ENCODE measurements at regions of chr2 and their contacts with region 1.

Region 1: DNA sequence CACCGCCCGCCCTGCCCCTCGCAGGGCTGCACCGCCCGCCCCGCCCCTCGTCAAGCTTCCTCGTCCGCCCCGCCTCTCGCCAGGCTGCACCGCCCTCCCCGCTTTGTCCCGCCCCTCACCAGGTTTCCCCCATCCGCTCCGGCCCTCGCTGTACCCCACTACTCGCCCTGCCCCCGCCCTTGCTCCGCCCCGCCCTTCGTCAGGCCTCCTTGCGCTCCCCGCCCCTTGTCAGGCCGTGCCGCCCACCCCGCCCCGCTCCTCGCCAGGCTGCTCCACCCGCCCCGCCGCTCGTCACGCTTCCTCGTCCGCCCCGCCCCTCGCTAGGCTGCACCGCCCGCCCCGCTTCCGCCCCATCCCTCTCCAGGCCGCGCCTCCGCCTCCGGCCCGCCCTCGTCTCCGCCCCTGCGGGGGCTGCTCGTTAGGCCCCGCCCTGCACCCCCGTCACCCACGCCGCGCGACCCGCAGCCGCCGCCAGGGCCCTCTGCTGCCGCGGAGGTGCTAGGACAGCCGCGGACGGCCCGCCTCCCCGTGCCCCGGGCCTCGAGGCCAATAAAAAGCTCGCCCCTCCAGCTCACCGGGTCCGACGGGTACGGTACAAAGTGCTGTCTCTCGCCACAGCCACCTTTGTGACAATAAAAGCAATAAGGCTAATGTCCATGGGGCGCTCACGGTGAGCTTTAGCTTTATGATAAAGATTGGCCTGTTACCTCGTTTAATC is 574 bp upstream of the DNPEP start:
- DNase-seq: peak; percentile 99
- H3K4me3 Mint-ChIP-seq: peak overlapping the region; percentile 75
- H3K27ac Mint-ChIP-seq: peak overlapping the region; percentile 84
- H3K4me1 Mint-ChIP-seq: peaks cover 12% of the 10 kb centered on the region
- H3K27me3 Mint-ChIP-seq: peaks cover 9% of the 10 kb centered on the region

Region 2: GRCh38 chr2:218286570-218287459 is 1101.5 kb before region 1 on chr2:
- intact Hi-C with region 1: loop called (anchors 10 kb)
- DNase-seq: peak; percentile 95
- H3K4me3 Mint-ChIP-seq: peak overlapping the region; percentile 86
- H3K27ac Mint-ChIP-seq: peak overlapping the region; percentile 92
- H3K4me1 Mint-ChIP-seq: peaks cover 67% of the 10 kb centered on the region
- H3K27me3 Mint-ChIP-seq: no peaks in the 10 kb centered on the region

Region 3: GRCh38 chr2:219160186-219161017 is 227.9 kb before region 1 on chr2 and contains the start of gene NHEJ1:
- intact Hi-C with region 1: loop called (anchors 1 kb)
- DNase-seq: peak; percentile 98
- H3K4me3 Mint-ChIP-seq: peak within 1 kb of the TSS; percentile 88
- H3K27ac Mint-ChIP-seq: peak within 1 kb of the TSS; percentile 97
- H3K4me1 Mint-ChIP-seq: peaks cover 20% of the 10 kb centered on the region
- H3K27me3 Mint-ChIP-seq: no peaks in the 10 kb centered on the region
- total RNA-seq, gene NHEJ1: 20.7 and 22.8 TPM in 2 replicates

Region 4: DNA sequence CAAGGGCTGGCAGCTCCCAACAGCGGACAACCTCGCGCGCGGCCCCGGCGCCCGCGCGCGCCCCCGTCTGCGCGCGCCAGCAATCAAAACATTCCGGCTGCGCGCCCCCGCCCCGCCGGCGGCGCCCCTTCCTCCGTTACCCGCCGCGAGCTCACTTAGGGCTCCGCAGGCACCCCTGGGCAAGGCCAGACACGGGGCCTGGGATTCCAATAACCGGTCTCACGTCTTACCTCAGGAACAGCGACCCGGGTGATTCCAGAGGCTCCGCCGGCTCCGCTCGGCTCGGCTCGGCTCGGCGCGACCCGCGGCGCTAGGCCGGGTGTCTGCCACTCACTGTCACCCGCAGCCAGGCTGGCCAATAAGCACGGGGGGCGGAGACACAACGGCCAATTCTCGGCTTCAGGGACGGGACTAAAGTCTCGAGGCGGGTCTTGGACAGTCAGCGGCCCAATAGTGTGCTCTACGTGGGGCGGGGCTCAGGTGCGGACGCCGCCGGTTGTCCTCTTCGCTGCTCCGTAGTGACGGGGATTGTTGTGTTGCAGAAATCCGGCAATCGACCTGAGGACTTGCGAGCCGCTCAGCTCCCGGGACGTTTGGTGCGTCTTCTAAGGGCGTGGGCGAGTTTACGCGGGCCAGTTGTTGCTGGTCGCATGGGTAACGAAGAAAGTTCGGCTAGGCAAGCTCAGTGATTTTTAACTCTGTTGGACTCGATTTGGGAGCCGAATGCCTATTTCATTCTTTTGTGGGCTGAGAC is 158.8 kb before region 1 on chr2 and contains the starts of genes ANKZF1 and ATG9A:
- intact Hi-C with region 1: loop called (anchors 1 kb)
- DNase-seq: peak; percentile 100
- H3K4me3 Mint-ChIP-seq: peak within 1 kb of the TSS; percentile 92
- H3K27ac Mint-ChIP-seq: peak within 1 kb of the TSS; percentile 98
- H3K4me1 Mint-ChIP-seq: peaks cover 43% of the 10 kb centered on the region
- H3K27me3 Mint-ChIP-seq: no peaks in the 10 kb centered on the region
- total RNA-seq, gene ANKZF1: 144 and 149 TPM in 2 replicates
- total RNA-seq, gene ATG9A: 61.6 and 67.2 TPM in 2 replicates

Region 5: DNA sequence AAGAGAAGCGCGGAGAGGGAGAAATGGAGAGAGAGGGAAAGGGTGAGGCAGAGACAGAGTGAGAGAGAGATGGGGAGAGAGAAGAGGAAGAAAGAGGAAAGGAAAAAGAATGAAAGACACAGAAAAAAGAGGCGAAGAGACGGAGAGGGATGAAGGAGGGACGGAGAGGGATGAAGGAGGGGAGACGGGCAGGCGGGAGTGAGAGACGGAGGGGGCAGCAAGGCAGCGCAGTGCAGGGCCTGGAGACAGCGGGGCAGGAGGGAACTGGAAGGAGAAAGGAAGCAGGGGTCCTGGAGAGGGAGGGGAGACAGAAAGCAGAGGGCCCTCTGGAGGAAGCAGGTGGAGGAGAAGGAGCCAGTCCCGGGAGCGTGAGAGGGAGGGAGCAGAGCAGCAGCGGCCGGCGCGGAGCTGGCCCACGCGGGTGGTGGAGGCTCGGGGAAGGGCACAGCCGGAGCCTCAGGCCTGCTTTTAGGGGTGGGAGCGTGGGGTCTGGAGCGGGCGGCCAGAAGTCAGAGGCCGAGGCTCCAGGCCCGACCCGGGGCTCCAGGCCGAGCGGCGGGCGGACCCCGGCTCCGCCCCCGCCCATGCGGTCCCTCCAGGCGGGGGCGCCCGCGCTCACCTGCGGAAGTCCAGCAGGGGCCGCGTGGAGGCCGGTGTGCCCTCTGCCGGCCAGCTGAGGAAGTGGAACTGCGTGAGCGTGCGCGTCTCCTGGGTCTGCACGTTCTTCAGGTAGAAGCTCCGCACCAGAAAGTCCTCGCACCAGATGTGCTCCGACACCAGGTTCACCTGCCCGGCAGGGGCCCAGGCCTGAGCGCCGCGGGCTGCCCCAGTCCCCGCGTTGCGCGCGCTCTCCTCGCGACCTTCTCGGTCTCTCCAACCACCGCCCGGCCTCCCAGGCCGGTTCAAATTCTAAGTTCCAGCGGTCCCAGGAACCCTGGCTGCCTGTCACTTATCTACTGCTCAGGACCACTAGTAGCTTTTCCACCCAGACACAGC is 93.6 kb before region 1 on chr2:
- intact Hi-C with region 1: loop called (anchors 1 kb)
- DNase-seq: peak; percentile 97
- H3K4me3 Mint-ChIP-seq: peak overlapping the region; percentile 84
- H3K27ac Mint-ChIP-seq: peak overlapping the region; percentile 97
- H3K4me1 Mint-ChIP-seq: peaks cover 17% of the 10 kb centered on the region
- H3K27me3 Mint-ChIP-seq: peaks cover 6% of the 10 kb centered on the region

Region 6: DNA sequence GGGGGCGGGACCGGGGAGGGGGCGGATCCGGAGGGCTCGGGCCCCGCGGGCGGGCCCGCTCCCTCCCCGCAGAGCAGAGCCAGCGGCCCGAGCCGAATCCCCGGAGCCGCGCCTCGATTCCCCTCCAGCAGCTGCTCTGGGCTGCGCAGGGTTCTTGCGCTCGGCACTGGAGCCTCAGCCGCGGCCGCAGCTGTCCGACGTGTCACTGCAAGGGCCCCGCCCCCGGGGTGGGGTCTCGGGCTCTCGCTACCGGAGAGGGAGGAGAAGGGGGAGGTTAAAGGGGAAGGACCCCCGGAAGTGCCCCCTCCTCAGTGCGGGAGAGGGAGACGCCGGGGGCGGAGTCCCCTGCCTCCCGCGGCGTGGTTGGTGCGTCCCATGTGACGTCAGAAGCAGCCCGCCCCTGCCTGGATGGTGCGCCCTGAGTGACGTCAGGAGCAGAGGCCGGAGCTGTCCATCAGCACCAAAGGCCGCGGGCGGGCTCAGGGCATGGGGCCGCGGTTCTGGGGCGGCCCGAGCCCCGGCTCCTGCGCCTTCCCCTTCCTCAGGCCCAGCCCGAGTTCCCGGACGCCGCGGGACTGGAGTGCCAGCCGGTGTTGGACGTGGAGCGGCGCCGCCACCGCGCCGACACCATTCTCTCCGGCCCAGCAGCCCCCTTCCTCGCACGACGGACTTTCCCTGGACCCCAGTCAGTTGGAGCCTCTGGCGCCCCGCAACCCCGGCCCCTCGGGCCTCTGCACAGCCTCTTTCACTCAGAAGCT is 155.5 kb after region 1 on chr2 and contains the starts of genes CHPF and TMEM198:
- intact Hi-C with region 1: loop called (anchors 1 kb)
- DNase-seq: peak; percentile 99
- H3K4me3 Mint-ChIP-seq: peak within 1 kb of the TSS; percentile 89
- H3K27ac Mint-ChIP-seq: peak within 1 kb of the TSS; percentile 75
- H3K4me1 Mint-ChIP-seq: peaks cover 17% of the 10 kb centered on the region
- H3K27me3 Mint-ChIP-seq: peaks cover 18% of the 10 kb centered on the region
- total RNA-seq, gene CHPF: 37.8 and 38.3 TPM in 2 replicates
- total RNA-seq, gene TMEM198: 3.1 and 3.4 TPM in 2 replicates

Measured in activated CD4-positive, alpha-beta T cell treated with anti-CD3 and anti-CD28 coated beads, Interleukin-2, amount 10 ng/mL, durations not matched to agents 24 days and 14 days (primary cell).